ENCODE measurements at regions of chr12 and their contacts with region 1.

Region 1: GRCh38 chr12:81644503-81644902 is 114.6 kb downstream of the PPFIA2 start:
- DNase-seq: no peak
- H3K4me3 ChIP-seq: no peak overlapping the region
- H3K27ac ChIP-seq: no peak overlapping the region
- H3K4me1 ChIP-seq: no peaks in the 10 kb centered on the region
- H3K27me3 ChIP-seq: no peaks in the 10 kb centered on the region
- CTCF ChIP-seq: peak in 5 of 6 experiments; percentile 25 to 51 (median 38)
- POLR2A ChIP-seq: no peak

Region 2: DNA sequence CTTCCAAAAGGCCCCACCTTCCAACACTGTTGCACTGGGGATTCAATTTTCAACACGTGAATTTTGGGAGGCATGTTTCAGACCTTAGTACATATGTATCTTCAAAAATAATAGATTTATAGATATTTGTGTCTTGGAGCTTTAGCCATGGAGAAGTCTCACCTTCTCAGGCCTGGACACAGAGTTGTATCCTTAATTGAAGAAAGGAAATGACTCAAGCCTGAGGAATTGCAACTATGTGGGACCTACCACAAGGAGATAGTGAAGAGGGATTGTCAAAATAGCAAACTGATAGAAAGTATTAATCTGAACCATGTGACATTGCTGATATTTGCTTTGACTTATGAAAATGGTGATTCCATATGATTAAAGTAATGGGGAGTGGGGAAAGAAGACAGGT is 476.8 kb before region 1 on chr12:
- intact Hi-C with region 1: no loop called
- DNase-seq: no peak
- H3K4me3 ChIP-seq: no peak overlapping the region
- H3K27ac ChIP-seq: no peak overlapping the region
- H3K4me1 ChIP-seq: no peaks in the 10 kb centered on the region
- H3K27me3 ChIP-seq: no peaks in the 10 kb centered on the region
- CTCF ChIP-seq: no peak
- POLR2A ChIP-seq: no peak

Region 3: DNA sequence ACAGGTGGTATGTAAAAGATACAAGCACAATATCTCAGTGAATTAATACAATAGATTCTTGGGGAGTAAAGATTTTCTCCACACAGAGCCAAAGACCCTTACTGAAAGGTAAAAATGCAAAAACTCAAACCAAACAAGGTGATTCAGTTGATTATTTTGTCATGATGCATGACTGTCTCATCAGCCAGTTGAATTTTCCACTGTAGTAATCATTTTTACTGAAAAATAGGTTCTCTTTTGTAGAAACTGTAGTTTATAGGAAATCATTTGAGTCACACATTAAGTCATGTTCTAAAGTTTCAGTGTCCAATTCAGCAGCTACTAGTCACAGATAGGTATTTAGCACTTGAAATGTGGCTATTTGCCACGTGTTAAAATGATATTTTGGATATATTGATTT is 61.1 kb after region 1 on chr12:
- intact Hi-C with region 1: no loop called
- DNase-seq: no peak
- H3K4me3 ChIP-seq: no peak overlapping the region
- H3K27ac ChIP-seq: no peak overlapping the region
- H3K4me1 ChIP-seq: no peaks in the 10 kb centered on the region
- H3K27me3 ChIP-seq: no peaks in the 10 kb centered on the region
- CTCF ChIP-seq: no peak
- POLR2A ChIP-seq: no peak

Region 4: GRCh38 chr12:82326905-82327503 is 682.5 kb after region 1 on chr12:
- intact Hi-C with region 1: loop called (anchors 10 kb)
- DNase-seq: no peak
- H3K4me3 ChIP-seq: no peak overlapping the region
- H3K27ac ChIP-seq: no peak overlapping the region
- H3K4me1 ChIP-seq: no peaks in the 10 kb centered on the region
- H3K27me3 ChIP-seq: no peaks in the 10 kb centered on the region
- CTCF ChIP-seq: peak in 5 of 6 experiments; percentile 22 to 56 (median 39)
- POLR2A ChIP-seq: no peak